GM12878 (cell line): ENCODE measurements at regions of chr19 and their contacts with region 1.

Region 1: DNA sequence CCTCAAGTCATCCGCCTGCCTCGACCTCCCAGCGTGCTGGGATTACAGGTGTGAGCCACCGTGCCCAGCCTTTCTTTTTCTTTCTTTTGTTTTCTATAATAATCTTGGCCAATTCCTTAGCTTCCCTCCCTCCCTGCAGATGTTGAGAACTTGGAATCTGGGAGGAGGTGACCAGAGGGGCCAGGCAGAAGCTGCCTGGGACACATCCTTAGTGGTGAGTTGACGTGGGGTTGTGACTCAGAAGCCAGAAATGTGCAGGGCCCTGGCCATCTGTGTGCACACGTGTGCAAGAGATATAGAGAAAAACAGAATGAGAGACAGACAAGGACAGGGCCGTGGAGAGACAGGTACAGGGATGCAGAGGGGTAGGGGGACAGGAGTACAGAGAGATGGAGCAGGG is 154.3 kb downstream of the SIPA1L3 start:
- DNase-seq: no peak
- ATAC-seq: no peak
- H3K4me3 ChIP-seq: no peak overlapping the region
- H3K27ac ChIP-seq: no peak overlapping the region
- H3K4me1 ChIP-seq: peaks cover 29% of the 10 kb centered on the region
- H3K27me3 ChIP-seq: no peaks in the 10 kb centered on the region
- CTCF ChIP-seq: no peak
- EP300 ChIP-seq: no peak
- POLR2A ChIP-seq: no peak
- RAD21 ChIP-seq: no peak

Region 2: GRCh38 chr19:38079926-38080380 is 18.7 kb after region 1 on chr19:
- CTCF ChIA-PET with region 1: interaction called, 3 read pairs
- POLR2A ChIA-PET with region 1: interaction called, 3 read pairs
- RAD21 ChIA-PET with region 1: interaction called, 7 read pairs
- SMC1A ChIA-PET with region 1: interaction called, 11 read pairs
- in situ Hi-C with region 1: no loop called
- intact Hi-C with region 1: no loop called
- DNase-seq: peak; percentile 77
- ATAC-seq: peak; percentile 98
- H3K4me3 ChIP-seq: no peak overlapping the region
- H3K27ac ChIP-seq: peak overlapping the region; percentile 13; the same call in 1 of the 2 replicates
- H3K4me1 ChIP-seq: peaks cover 16% of the 10 kb centered on the region
- H3K27me3 ChIP-seq: no peaks in the 10 kb centered on the region
- CTCF ChIP-seq: no peak
- EP300 ChIP-seq: peak in 1 of 2 experiments; percentile 84; a peak in 2 of 4 replicates
- POLR2A ChIP-seq: no peak
- RAD21 ChIP-seq: no peak